Natural killer cell (primary cell): ENCODE measurements at regions of chr16 and their contacts with region 1.

Region 1: GRCh38 chr16:2926650-2927646 is 15.2 kb downstream of the FLYWCH1 start:
- DNase-seq: peak; percentile 81 to 95
- ATAC-seq: peak; percentile 100
- H3K4me3 ChIP-seq: no peak overlapping the region
- H3K4me3 Mint-ChIP-seq: no peak overlapping the region
- H3K27ac ChIP-seq: no peak overlapping the region
- H3K27ac Mint-ChIP-seq: peak overlapping the region in 1 of 2 donors; percentile 46
- H3K4me1 ChIP-seq: peaks cover 7% of the 10 kb centered on the region
- H3K4me1 Mint-ChIP-seq: peaks cover 9 to 16% of the 10 kb centered on the region in 2 donors
- H3K27me3 ChIP-seq: no peaks in the 10 kb centered on the region
- H3K27me3 Mint-ChIP-seq: no peaks in the 10 kb centered on the region
- CTCF ChIP-seq: peak; percentile 97

Region 2: DNA sequence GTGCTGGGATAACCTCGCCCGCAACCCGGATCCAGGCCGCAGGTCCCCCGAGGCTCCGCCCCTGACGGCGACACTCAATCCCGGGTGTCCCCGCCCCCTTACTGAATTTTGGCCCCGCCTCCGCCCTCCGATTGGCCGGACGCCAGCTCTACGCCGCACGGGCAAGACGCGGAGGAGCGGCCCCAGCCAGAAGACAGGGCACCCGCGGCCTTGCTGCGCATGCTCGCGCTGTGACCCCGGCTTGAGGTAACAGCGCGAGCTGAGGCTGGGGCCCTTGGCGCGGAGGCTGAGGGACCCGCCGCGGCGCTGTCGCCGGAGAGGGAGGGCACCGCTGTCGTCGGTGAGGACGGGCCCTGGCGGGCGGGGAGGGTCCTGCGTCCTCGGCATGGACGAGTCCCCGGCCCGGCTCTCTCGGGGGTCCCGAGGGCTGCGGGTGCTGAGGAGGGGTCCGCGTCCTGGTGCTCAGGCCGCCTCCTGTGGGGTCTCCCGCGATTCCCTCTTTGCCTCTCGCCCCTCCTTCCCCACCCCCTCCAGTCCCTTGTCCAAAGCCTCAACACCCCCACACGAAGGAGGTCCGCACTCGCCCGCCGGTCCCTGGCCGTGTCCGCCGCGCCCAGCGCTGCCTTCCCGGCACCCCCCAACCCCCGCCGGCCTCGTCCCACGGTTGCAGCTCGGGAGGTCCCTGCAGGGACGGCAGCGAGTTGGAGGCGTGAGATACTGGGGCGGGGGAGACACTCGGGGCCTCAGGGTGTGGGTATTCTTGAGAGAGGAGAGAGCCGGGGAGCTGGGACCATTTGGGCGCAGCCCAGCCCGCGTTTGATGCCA is 43.7 kb before region 1 on chr16 and contains the start of gene FLYWCH2:
- intact Hi-C with region 1: loop called (anchors 2 kb)
- DNase-seq: peak; percentile 99 to 100
- ATAC-seq: peak; percentile 81 to 93 (median 82)
- H3K4me3 ChIP-seq: peak within 1 kb of the TSS; percentile 66
- H3K4me3 Mint-ChIP-seq: peak within 1 kb of the TSS; percentile 89
- H3K27ac ChIP-seq: peak within 1 kb of the TSS; percentile 91
- H3K27ac Mint-ChIP-seq: peak within 1 kb of the TSS; percentile 94 to 96
- H3K4me1 ChIP-seq: peaks cover 15% of the 10 kb centered on the region
- H3K4me1 Mint-ChIP-seq: peaks cover 7 to 18% of the 10 kb centered on the region in 2 donors
- H3K27me3 ChIP-seq: no peaks in the 10 kb centered on the region
- H3K27me3 Mint-ChIP-seq: no peaks in the 10 kb centered on the region
- CTCF ChIP-seq: no peak
- total RNA-seq, gene FLYWCH2: 12.0 to 12.7 (median 12.6) TPM